PC-9 (cell line): ENCODE measurements at regions of chr1 and their contacts with region 1.

Region 1: GRCh38 chr1:33295450-33296081 is 25.3 kb downstream of the A3GALT2 start:
- DNase-seq: peak; percentile 61 to 82
- H3K4me3 ChIP-seq: no peak overlapping the region
- H3K27ac ChIP-seq: no peak overlapping the region
- H3K4me1 ChIP-seq: no peaks in the 10 kb centered on the region
- H3K27me3 ChIP-seq: no peaks in the 10 kb centered on the region
- CTCF ChIP-seq: peak; percentile 97

Region 2: GRCh38 chr1:33127001-33127791 is 168.4 kb before region 1 on chr1:
- CTCF ChIA-PET with region 1: interaction called, 3 read pairs
- POLR2A ChIA-PET with region 1: no interaction called
- intact Hi-C with region 1: loop called (anchors 5 kb)
- DNase-seq: peak; percentile 97 to 99
- H3K4me3 ChIP-seq: peak overlapping the region; percentile 85
- H3K27ac ChIP-seq: peak overlapping the region; percentile 77
- H3K4me1 ChIP-seq: peaks cover 28% of the 10 kb centered on the region
- H3K27me3 ChIP-seq: no peaks in the 10 kb centered on the region
- CTCF ChIP-seq: peak; percentile 88

Region 3: GRCh38 chr1:33410091-33410701 is 114.6 kb after region 1 on chr1:
- CTCF ChIA-PET with region 1: no interaction called
- POLR2A ChIA-PET with region 1: no interaction called
- intact Hi-C with region 1: no loop called
- DNase-seq: no peak
- H3K4me3 ChIP-seq: no peak overlapping the region
- H3K27ac ChIP-seq: no peak overlapping the region
- H3K4me1 ChIP-seq: no peaks in the 10 kb centered on the region
- H3K27me3 ChIP-seq: no peaks in the 10 kb centered on the region
- CTCF ChIP-seq: no peak

Region 4: DNA sequence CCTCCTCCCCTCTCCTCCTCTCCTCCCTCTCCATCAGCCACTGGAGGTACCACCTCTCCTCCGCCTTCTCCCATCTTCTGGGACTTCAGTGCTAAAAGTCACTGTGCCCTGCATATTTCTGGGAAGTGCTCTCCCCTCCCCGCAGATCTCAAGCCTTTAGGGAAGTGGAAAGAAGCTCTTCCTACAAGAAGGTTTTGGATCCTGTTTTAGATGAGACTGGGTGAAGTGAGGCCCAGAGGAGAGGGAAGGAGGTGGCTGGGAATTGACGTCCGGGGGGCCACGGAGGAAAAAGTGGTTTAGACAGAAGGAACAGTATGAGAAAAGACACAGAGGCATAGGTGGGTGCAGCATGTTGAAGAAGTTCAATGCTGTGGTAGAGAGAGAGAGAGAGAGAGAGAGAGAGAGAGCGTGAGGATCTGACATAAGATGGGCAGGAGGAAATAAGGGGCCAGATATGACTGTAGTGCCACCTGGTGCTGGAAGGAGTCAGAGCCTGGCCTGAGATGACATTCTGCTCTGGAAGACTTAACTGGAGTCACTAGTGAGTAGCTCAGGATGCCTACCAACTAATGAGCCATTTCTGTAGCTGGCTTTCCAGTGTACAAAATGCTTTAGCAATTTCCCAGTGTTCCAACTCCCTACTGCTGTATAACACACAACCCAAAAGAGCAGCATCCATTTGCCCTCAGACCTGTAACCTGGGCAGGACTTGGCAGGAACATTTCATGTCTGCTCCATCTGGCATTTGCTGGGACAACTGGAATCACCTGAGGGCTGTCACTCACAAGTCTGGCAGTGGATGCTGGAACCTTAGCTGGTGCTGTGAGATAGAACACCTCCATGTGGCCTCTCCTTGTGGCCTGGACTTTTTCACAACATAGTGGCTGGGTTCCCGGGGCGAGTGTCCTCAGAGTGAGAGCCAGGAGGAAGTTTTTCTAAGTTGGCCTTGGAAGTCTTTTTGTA is 160.3 kb after region 1 on chr1:
- CTCF ChIA-PET with region 1: no interaction called
- POLR2A ChIA-PET with region 1: no interaction called
- intact Hi-C with region 1: loop called (anchors 5 kb)
- DNase-seq: peak; percentile 50 to 51
- H3K4me3 ChIP-seq: no peak overlapping the region
- H3K27ac ChIP-seq: no peak overlapping the region
- H3K4me1 ChIP-seq: peaks cover 32% of the 10 kb centered on the region
- H3K27me3 ChIP-seq: no peaks in the 10 kb centered on the region
- CTCF ChIP-seq: peak; percentile 76

Region 5: DNA sequence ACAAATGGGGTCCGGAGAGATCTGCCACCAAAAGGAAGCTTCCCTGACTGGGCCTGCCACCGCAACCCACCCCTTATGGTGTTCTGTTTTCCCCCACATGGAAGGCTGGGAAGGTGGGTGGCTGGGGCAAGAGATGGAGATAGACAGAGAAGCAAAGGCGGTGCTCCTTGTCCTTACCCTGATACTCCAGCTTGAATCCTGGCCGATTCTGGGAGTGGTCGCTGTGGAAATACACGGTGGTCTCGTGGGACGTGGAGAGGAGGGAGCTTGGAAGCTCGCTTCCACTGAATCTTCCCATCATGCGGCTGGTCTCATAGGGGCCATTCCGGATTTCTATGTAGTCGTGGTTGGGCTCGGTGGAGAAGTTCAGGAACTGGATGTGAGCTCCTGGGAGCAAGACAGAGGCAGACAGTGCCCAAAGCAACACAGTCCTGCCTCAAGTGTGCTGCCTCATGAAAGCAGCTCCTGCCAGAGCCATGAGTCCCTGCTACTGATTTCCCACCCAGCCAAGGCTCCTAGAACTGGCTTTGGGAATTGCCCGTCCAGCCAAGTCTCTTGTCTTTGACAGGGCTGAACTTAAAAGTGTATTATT is 315.4 kb after region 1 on chr1:
- CTCF ChIA-PET with region 1: no interaction called
- POLR2A ChIA-PET with region 1: no interaction called
- intact Hi-C with region 1: loop called (anchors 5 kb)
- DNase-seq: no peak
- H3K4me3 ChIP-seq: no peak overlapping the region
- H3K27ac ChIP-seq: no peak overlapping the region
- H3K4me1 ChIP-seq: no peaks in the 10 kb centered on the region
- H3K27me3 ChIP-seq: peaks cover 82% of the 10 kb centered on the region
- CTCF ChIP-seq: no peak